Gastrocnemius medialis (tissue), 4 donors: ENCODE measurements at regions of chr13 and their contacts with region 1.

Region 1: DNA sequence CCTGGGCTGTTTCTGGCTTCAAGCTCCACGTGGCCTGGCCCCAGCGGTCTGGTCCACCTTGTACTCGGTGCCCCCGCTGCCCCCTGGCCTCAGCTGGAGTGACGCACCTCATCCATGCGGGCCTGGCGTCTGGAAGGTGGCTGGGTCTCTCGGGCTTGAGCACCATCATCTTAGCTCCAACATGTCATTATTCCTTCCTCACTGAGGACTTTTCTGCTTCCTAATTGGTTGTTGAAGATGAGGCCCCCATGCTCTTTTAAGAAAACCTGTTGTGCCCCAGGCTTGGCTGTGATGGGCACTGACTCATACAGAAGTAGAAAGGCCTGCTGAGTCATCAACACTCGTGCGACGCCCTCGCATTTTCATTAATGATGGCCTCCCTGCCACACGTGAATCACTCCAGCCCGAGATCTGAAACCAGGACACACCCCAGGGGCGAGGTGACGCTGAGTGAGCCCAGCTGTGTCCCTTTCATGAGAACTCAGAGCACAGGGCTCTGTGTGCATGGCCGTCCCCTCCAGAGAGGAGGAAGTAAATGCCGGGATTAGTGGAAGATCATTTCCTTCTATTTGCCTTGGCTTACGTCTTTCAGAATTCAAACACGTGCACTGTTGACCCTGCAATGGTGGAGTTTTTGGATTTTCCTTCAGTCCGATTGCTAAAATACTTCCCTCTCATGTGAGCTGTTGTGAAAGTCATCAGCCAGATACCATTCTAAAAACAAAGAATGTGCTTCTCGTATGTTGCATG is 14.0 kb upstream of the GJA3 start:
- DNase-seq: peak; percentile 38 to 47
- ATAC-seq: peak; percentile 36 to 50
- H3K4me3 ChIP-seq: no peak overlapping the region
- H3K27ac ChIP-seq: no peak overlapping the region
- H3K4me1 ChIP-seq: no peaks in the 10 kb centered on the region
- H3K27me3 ChIP-seq: peaks cover 9 to 30% (median 27%) of the 10 kb centered on the region in 3 donors
- CTCF ChIP-seq: no peak
- POLR2A ChIP-seq: no peak

Region 2: GRCh38 chr13:19984430-19985218 is 190.2 kb before region 1 on chr13:
- in situ Hi-C with region 1: loop called in 1 of 4 experiments (anchors 25 kb)
- intact Hi-C with region 1: no loop called
- DNase-seq: no peak
- ATAC-seq: no peak
- H3K4me3 ChIP-seq: no peak overlapping the region
- H3K27ac ChIP-seq: no peak overlapping the region
- H3K4me1 ChIP-seq: peaks cover 14 to 15% of the 10 kb centered on the region in 2 donors
- H3K27me3 ChIP-seq: no peaks in the 10 kb centered on the region
- CTCF ChIP-seq: peak in 4 of 5 experiments; percentile 22 to 52 (median 31)
- POLR2A ChIP-seq: no peak

Region 3: DNA sequence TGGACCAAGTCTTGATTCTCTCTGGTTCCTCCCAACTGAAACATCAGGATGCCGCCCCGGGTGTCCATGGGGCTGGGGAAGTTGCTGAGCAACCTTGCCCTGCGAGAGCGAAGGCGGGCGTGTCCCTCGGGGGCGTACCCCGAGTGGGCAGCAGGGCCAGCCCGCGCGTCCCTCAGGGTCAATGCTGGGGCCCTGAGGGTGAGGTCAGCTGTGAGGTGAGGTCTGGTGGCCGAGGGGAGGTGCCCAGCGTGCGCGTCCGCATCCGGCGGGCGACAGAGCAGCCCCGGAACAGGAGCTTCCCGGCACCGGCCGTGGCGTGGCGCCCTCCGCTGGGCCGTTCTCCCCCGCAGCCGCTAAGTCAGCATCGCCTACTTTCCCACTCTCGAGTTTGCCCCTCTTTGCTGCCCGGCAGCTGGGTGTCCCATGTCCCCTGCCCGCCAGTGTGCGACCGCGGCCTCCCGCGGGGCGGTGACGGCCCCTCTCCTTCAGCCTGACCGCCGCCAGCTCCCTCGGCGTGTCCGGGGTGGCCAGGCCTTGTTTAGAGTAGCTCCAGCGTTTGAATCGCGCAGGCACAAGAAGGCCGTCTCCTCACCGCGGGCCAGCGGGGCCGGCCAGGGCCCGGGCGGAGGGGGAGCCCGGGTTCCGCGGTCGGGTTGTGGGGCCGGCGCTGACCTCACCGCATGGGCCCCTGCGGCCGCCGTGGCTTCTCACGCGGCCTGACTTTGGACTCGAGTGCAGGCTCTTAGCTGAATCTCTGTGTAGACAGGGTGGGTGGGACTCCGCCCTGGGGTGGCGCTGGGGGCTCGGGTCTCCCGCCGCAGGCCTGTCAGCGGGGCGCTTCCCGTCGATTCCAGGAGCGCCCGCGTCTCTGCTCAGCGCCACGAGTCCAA is 47.0 kb before region 1 on chr13:
- in situ Hi-C with region 1: no loop called
- intact Hi-C with region 1: no loop called
- DNase-seq: peak; percentile 47 to 60
- ATAC-seq: peak; percentile 80 to 83
- H3K4me3 ChIP-seq: peak overlapping the region; percentile 58 to 69 (median 66)
- H3K27ac ChIP-seq: peak overlapping the region; percentile 71 to 79 (median 72)
- H3K4me1 ChIP-seq: peaks cover 15 to 16% of the 10 kb centered on the region in 2 donors
- H3K27me3 ChIP-seq: no peaks in the 10 kb centered on the region
- CTCF ChIP-seq: peak in 3 of 5 experiments; percentile 25 to 58 (median 51)
- POLR2A ChIP-seq: peak in 1 of 2 donors; percentile 35

Region 4: GRCh38 chr13:20955496-20955895 is 780.7 kb after region 1 on chr13:
- in situ Hi-C with region 1: no loop called
- intact Hi-C with region 1: no loop called
- DNase-seq: no peak
- ATAC-seq: no peak
- H3K4me3 ChIP-seq: no peak overlapping the region
- H3K27ac ChIP-seq: no peak overlapping the region
- H3K4me1 ChIP-seq: no peaks in the 10 kb centered on the region
- H3K27me3 ChIP-seq: no peaks in the 10 kb centered on the region
- CTCF ChIP-seq: no peak
- POLR2A ChIP-seq: no peak